HCT116 (cell line): ENCODE measurements at regions of chr3 and their contacts with region 1.

Region 1: GRCh38 chr3:185983495-185984141 is 45.8 kb upstream of the TRA2B start:
- DNase-seq: peak; percentile 59
- ATAC-seq: peak; percentile 99
- H3K4me3 ChIP-seq: no peak overlapping the region
- H3K27ac ChIP-seq: no peak overlapping the region
- H3K4me1 ChIP-seq: peaks cover 0 to 5% of the 10 kb centered on the region in 2 experiments; a peak in 1 of 4 replicates
- H3K27me3 ChIP-seq: no peaks in the 10 kb centered on the region
- CTCF ChIP-seq: peak; percentile 88 to 96 (median 91)
- POLR2A ChIP-seq: no peak
- RAD21 ChIP-seq: peak; percentile 98

Region 2: DNA sequence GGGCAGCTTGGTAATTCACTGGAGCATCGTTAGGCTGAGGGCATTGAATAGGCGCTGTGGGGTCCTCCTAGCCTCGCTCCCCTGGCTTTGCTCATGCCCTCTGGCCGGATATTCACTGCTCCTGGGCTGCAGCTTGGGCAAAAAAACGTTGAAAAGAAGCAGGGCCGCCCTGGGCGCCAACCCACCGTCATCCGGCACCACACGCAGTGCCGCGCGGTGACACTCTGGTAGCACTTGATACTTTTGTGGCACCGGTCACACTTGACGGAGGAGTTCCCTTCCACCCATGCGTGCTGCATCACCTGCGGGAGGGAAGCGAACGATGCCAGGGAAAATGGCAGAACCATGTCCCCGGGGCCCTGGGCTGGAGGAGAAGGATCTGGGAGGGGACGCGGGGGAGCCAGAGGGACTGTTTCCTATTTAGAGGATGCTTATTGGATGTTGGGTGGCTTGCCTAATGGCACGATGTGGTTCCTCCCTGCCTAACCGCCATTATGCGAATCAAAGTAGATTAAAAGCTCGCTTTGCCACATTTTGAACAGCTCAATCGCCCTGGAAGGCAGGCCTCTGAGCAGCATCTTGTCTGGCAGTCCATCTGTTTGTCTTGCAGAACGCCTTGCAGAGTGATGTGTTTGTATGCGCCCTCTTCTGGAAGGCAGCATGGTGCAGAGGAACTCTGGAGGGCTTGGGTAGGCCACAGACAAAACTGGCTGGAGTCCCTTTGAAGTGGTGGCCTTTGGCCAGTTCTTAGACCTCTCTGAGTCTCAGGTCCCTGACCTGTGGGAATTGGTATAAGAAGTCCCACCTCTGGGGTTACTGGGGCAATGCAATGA is 285.2 kb after region 1 on chr3:
- CTCF ChIA-PET with region 1: interaction called, 6 read pairs
- POLR2A ChIA-PET with region 1: no interaction called
- RAD21 ChIA-PET with region 1: no interaction called
- intact Hi-C with region 1: loop called (anchors 2 kb)
- DNase-seq: no peak
- ATAC-seq: peak; percentile 88
- H3K4me3 ChIP-seq: no peak overlapping the region
- H3K27ac ChIP-seq: no peak overlapping the region
- H3K4me1 ChIP-seq: no peaks in the 10 kb centered on the region
- H3K27me3 ChIP-seq: no peaks in the 10 kb centered on the region
- CTCF ChIP-seq: peak; percentile 32 to 37 (median 37); a peak in 3 of 6 replicates
- POLR2A ChIP-seq: no peak
- RAD21 ChIP-seq: peak; percentile 47

Region 3: DNA sequence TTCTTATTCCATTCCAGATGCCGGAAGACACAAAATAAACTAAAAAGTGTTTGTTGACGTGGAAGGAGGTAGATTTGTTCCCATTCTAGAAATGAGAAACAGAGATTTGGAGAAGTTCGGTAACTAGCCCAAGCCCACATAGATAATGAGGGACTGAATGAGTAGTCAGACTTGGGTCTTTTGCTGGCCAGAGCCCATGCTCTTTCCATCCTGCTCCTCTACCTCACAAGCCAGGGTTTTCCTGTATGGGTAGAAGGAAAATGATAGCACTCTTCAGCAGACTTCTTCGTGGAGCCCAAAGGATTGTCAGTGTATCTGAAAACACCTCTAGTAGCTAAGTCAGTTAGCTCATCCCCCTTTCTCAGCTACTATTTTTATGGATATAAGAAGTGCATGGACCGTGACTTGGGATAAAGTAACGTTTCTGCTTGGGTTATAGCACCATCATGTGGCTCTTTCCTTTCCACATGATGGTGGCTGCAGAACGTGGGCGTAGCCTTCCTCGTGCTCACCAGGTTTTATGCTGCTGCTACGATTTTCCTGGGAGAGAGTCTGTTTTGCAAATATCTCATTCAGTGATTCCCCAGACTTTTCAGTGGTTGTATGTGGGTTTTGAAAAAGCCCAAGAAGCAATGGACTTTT is 293.8 kb after region 1 on chr3:
- CTCF ChIA-PET with region 1: interaction called, 16 read pairs
- POLR2A ChIA-PET with region 1: no interaction called
- RAD21 ChIA-PET with region 1: no interaction called
- intact Hi-C with region 1: loop called (anchors 1 kb)
- DNase-seq: peak; percentile 40
- ATAC-seq: peak; percentile 99
- H3K4me3 ChIP-seq: no peak overlapping the region
- H3K27ac ChIP-seq: no peak overlapping the region
- H3K4me1 ChIP-seq: peaks cover 0 to 5% of the 10 kb centered on the region in 2 experiments; a peak in 1 of 4 replicates
- H3K27me3 ChIP-seq: no peaks in the 10 kb centered on the region
- CTCF ChIP-seq: peak; percentile 49 to 80 (median 68)
- POLR2A ChIP-seq: no peak
- RAD21 ChIP-seq: peak; percentile 93

Region 4: DNA sequence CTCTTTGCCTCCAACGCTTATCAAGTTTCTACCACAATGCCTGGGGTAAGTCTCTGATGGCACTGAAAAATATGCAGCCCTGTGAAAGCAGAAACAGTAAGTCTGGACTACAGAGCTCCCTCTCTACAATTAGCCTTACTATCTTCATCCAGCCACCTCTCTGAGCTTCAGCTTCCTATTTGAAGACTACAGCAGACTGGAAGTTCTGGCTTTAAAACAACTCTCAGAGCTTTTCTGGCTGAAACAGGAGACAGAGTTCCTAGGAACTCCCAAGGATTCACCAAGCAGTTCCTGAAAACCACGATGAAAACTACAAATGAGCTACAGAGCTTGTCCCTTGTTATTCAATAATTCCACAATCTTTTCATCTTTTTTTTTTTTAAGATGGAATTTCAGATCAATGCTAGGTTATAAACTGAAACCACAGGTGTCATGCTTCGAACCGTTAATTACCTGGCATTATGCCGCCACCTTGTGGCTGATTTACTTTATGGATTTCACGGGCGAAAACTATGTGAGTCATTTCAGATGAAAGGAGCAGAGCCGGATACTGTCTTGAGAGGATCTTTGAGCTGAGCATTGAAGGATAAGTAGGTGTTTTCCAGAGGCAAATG is 556.7 kb after region 1 on chr3:
- CTCF ChIA-PET with region 1: interaction called, 4 read pairs
- POLR2A ChIA-PET with region 1: no interaction called
- RAD21 ChIA-PET with region 1: interaction called in 1 of 2 experiments, 6 read pairs
- intact Hi-C with region 1: loop called (anchors 1 kb)
- DNase-seq: peak; percentile 76
- ATAC-seq: peak; percentile 93
- H3K4me3 ChIP-seq: no peak overlapping the region
- H3K27ac ChIP-seq: no peak overlapping the region
- H3K4me1 ChIP-seq: peaks cover 9 to 17% of the 10 kb centered on the region in 2 experiments; a peak in 3 of 4 replicates
- H3K27me3 ChIP-seq: no peaks in the 10 kb centered on the region
- CTCF ChIP-seq: peak; percentile 50 to 83 (median 78)
- POLR2A ChIP-seq: no peak
- RAD21 ChIP-seq: peak; percentile 92

Region 5: GRCh38 chr3:186826976-186827731 is 843.5 kb after region 1 on chr3:
- CTCF ChIA-PET with region 1: interaction called, 4 read pairs
- POLR2A ChIA-PET with region 1: no interaction called
- RAD21 ChIA-PET with region 1: no interaction called
- intact Hi-C with region 1: loop called (anchors 10 kb)
- DNase-seq: peak; percentile 49
- ATAC-seq: peak; percentile 91
- H3K4me3 ChIP-seq: peak overlapping the region; percentile 75 to 80
- H3K27ac ChIP-seq: peak overlapping the region; percentile 89
- H3K4me1 ChIP-seq: peaks cover 4 to 14% of the 10 kb centered on the region in 2 experiments; a peak in 2 of 4 replicates
- H3K27me3 ChIP-seq: peaks cover 26% of the 10 kb centered on the region
- CTCF ChIP-seq: no peak
- POLR2A ChIP-seq: peak; percentile 89
- RAD21 ChIP-seq: no peak